SK-N-SH (cell line): ENCODE measurements at regions of chr2 and their contacts with region 1.

Region 1: GRCh38 chr2:174771631-174772471 is 7.6 kb upstream of the CHRNA1 start:
- DNase-seq: peak; percentile 81
- H3K4me3 ChIP-seq: peak overlapping the region in 1 of 2 experiments; percentile 29; a peak in 2 of 4 replicates
- H3K27ac ChIP-seq: peak overlapping the region; percentile 36 to 80; a peak in 3 of 4 replicates
- H3K4me1 ChIP-seq: peaks cover 0 to 22% of the 10 kb centered on the region in 2 experiments; a peak in 2 of 4 replicates
- H3K27me3 ChIP-seq: no peaks in the 10 kb centered on the region
- CTCF ChIP-seq: peak; percentile 90
- EP300 ChIP-seq: no peak; a peak in 1 of 4 replicates
- RAD21 ChIP-seq: peak; percentile 96

Region 2: DNA sequence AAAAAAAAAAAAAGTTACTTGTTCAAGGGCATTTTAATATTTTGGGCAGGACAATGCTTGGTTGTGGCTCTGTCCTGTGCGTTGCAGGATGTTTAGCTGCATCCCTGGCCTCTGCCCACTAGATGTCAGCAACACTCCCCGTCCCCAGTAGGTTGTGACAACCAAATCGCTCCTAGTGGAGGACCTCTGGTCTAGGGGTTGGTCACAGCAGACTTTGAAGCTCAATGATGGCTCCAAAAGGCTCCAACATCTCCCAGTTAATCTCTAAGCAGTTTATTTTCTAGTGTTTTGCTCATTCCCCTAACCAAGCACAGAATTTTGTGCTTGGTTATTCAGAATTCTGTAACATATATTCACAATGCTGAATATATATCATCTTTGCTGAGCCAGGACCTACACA is 74.6 kb before region 1 on chr2:
- CTCF ChIA-PET with region 1: interaction called, 48 read pairs
- POLR2A ChIA-PET with region 1: no interaction called
- DNase-seq: peak; percentile 80
- H3K4me3 ChIP-seq: no peak overlapping the region; a peak in 1 of 4 replicates
- H3K27ac ChIP-seq: no peak overlapping the region
- H3K4me1 ChIP-seq: peaks cover 0 to 5% of the 10 kb centered on the region in 2 experiments; a peak in 1 of 4 replicates
- H3K27me3 ChIP-seq: no peaks in the 10 kb centered on the region
- CTCF ChIP-seq: peak; percentile 89
- EP300 ChIP-seq: no peak
- RAD21 ChIP-seq: peak; percentile 78

Region 3: DNA sequence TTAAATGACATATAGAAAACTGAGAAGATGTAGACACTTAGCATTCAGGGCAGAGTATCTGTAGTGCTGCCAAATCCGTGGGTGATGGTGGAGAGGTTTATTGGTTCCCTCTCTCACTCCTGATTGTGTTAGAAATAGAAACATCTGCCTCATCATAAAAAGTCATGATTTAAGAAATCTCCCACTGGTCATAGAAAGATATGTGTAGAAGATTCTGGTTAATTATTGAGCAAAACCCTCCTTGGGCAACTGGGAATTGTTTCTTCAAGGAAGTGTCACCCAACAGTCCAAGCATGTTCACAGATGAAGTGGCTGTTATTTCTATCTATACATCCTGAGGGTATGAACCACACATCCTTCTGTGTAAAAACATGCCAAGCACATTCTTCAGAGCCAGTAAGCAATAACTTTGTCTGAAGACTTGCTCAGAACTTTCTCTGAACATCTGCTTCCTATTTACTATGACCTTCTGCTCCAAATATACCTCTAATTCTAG is 26.0 kb after region 1 on chr2:
- CTCF ChIA-PET with region 1: interaction called, 16 read pairs
- POLR2A ChIA-PET with region 1: no interaction called
- DNase-seq: no peak
- H3K4me3 ChIP-seq: no peak overlapping the region
- H3K27ac ChIP-seq: peak overlapping the region; percentile 65 to 73; a peak in 3 of 4 replicates
- H3K4me1 ChIP-seq: peaks cover 0 to 12% of the 10 kb centered on the region in 2 experiments
- H3K27me3 ChIP-seq: no peaks in the 10 kb centered on the region
- CTCF ChIP-seq: no peak
- EP300 ChIP-seq: no peak
- RAD21 ChIP-seq: no peak

Region 4: GRCh38 chr2:174878537-174879147 is 106.8 kb after region 1 on chr2:
- CTCF ChIA-PET with region 1: interaction called, 12 read pairs
- POLR2A ChIA-PET with region 1: interaction called, 3 read pairs
- DNase-seq: peak; percentile 45
- H3K4me3 ChIP-seq: peak overlapping the region; percentile 43 to 44; a peak in 3 of 4 replicates
- H3K27ac ChIP-seq: peak overlapping the region; percentile 42 to 92
- H3K4me1 ChIP-seq: peaks cover 7 to 31% of the 10 kb centered on the region in 2 experiments; a peak in 3 of 4 replicates
- H3K27me3 ChIP-seq: no peaks in the 10 kb centered on the region
- CTCF ChIP-seq: no peak
- EP300 ChIP-seq: peak; percentile 32 to 65; a peak in 2 of 4 replicates
- RAD21 ChIP-seq: no peak

Region 5: GRCh38 chr2:174985630-174986029 is 213.8 kb after region 1 on chr2:
- CTCF ChIA-PET with region 1: interaction called, 316 read pairs
- POLR2A ChIA-PET with region 1: interaction called, 3 read pairs
- DNase-seq: peak; percentile 27
- H3K4me3 ChIP-seq: no peak overlapping the region
- H3K27ac ChIP-seq: 0 out of 4 replicates have a peak overlapping the region, but pooled peaks of 1 of the 2 experiments have one; percentile 2
- H3K4me1 ChIP-seq: peaks cover 0 to 2% of the 10 kb centered on the region in 2 experiments; a peak in 2 of 4 replicates
- H3K27me3 ChIP-seq: no peaks in the 10 kb centered on the region
- CTCF ChIP-seq: peak; percentile 83
- EP300 ChIP-seq: no peak
- RAD21 ChIP-seq: peak; percentile 87

Region 6: GRCh38 chr2:175030380-175031271 is 258.8 kb after region 1 on chr2:
- CTCF ChIA-PET with region 1: interaction called, 16 read pairs
- POLR2A ChIA-PET with region 1: no interaction called
- DNase-seq: peak; percentile 33
- H3K4me3 ChIP-seq: no peak overlapping the region; a peak in 1 of 4 replicates
- H3K27ac ChIP-seq: no peak overlapping the region
- H3K4me1 ChIP-seq: no peaks in the 10 kb centered on the region
- H3K27me3 ChIP-seq: no peaks in the 10 kb centered on the region
- CTCF ChIP-seq: peak; percentile 50
- EP300 ChIP-seq: no peak
- RAD21 ChIP-seq: peak; percentile 75